K562 (cell line): ENCODE measurements at regions of chr2 and their contacts with region 1.

Region 1: DNA sequence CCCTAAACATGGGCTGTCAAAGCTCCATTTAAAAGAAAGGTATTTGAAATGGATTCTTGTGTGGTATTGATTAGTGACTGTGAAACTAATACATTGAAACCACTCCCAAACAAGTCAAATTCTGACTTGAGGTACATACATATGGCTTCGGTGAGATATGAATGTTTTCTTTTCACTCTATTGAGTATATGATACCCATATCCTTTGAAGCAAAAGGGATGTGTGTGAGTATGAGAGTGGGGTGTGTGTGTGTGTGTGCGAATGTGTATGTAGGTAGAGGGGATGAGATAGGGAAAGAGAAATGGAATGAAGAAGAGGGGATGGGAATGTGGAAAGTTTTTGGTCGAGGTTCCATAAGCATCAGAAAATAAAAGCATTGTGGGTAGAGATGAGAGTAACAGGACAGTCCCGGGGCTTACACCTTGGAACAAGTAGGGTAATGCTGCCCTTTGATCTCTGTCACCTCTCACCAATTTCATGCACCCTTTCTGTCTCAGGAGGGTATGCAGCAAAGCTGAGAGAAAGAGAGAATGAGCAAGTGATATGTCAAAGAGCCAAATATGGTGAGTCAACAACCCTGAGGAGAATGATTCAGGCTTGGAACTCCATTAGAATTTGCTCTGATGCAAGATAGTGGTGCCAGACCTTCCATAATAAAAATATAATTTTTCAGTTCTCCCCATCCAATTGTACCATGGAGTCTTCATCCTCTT is 64.0 kb upstream of the ZEB2 start:
- DNase-seq: peak in 1 of 4 experiments; percentile 37
- ATAC-seq: no peak
- H3K4me3 ChIP-seq: 0 out of 2 replicates have a peak overlapping the region, but pooled peaks have one; percentile 21
- H3K27ac ChIP-seq: peak overlapping the region; percentile 100
- H3K4me1 ChIP-seq: peaks cover 4 to 53% of the 10 kb centered on the region in 2 experiments
- H3K27me3 ChIP-seq: no peaks in the 10 kb centered on the region
- CTCF ChIP-seq: no peak
- EP300 ChIP-seq: no peak
- POLR2A ChIP-seq: peak; percentile 20; the same call in 1 of the 2 replicates
- RAD21 ChIP-seq: no peak

Region 2: GRCh38 chr2:144332356-144333142 is 251.3 kb before region 1 on chr2:
- CTCF ChIA-PET with region 1: no interaction called
- POLR2A ChIA-PET with region 1: no interaction called
- in situ Hi-C with region 1: no loop called
- intact Hi-C with region 1: loop called (anchors 2 kb)
- DNase-seq: peak; percentile 92 to 94 (median 92)
- ATAC-seq: peak; percentile 91
- H3K4me3 ChIP-seq: peak overlapping the region; percentile 60
- H3K27ac ChIP-seq: peak overlapping the region; percentile 95
- H3K4me1 ChIP-seq: peaks cover 6 to 9% of the 10 kb centered on the region in 2 experiments; a peak in 4 of 5 replicates
- H3K27me3 ChIP-seq: no peaks in the 10 kb centered on the region
- CTCF ChIP-seq: no peak
- EP300 ChIP-seq: no peak
- POLR2A ChIP-seq: peak; percentile 85
- RAD21 ChIP-seq: no peak

Region 3: DNA sequence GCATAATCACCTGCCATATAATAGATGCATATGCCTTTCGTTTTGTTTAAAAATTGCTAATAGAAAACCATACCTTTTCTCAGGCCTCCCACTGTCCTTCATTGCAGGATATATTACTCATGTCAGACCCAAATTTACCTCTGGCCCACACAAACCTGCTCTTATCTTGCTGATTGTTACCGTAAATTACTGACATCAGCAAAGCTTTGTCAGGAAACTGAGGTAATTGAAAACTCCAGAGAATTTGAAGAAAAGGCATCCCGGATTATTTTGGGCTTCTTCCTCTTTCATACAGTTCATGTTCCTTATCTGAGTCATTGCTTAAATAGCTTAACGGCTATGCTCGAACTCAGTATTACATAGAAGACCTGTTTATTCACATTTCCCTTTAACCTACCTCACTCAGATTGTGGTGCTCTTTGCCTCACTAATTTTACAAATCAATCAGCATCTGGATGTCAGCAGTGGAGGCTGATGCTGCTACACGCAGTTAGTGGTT is 209.7 kb before region 1 on chr2:
- CTCF ChIA-PET with region 1: no interaction called
- POLR2A ChIA-PET with region 1: no interaction called
- in situ Hi-C with region 1: no loop called
- intact Hi-C with region 1: loop called (anchors 5 kb)
- DNase-seq: no peak
- ATAC-seq: no peak
- H3K4me3 ChIP-seq: no peak overlapping the region
- H3K27ac ChIP-seq: peak overlapping the region; percentile 41; the same call in 2 of the 3 replicates
- H3K4me1 ChIP-seq: peaks cover 4 to 72% of the 10 kb centered on the region in 2 experiments
- H3K27me3 ChIP-seq: no peaks in the 10 kb centered on the region
- CTCF ChIP-seq: no peak
- EP300 ChIP-seq: no peak
- POLR2A ChIP-seq: no peak
- RAD21 ChIP-seq: no peak

Region 4: DNA sequence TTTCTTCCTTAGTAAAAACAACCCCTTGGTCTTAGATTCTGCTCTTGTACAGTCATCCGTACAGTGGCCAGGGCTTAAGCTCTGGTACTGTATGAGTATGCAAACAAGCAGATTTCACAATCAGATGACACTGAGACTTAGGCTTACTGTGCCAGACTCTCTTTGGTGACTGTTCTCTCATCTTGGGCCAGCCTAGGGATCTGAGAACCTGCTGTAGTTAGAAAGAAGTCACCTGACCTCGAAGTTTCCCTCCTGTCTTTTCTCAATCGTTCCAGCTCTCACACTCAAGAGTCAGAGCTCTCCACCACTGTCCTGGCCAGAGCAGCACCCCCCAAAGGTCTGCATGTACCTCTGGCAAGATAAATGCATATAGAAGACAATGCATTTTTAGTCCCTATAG is 127.2 kb before region 1 on chr2:
- CTCF ChIA-PET with region 1: no interaction called
- POLR2A ChIA-PET with region 1: no interaction called
- in situ Hi-C with region 1: no loop called
- intact Hi-C with region 1: loop called (anchors 5 kb)
- DNase-seq: peak in 2 of 4 experiments; percentile 46 to 62
- ATAC-seq: peak; percentile 69
- H3K4me3 ChIP-seq: no peak overlapping the region
- H3K27ac ChIP-seq: no peak overlapping the region
- H3K4me1 ChIP-seq: peaks cover 5 to 84% of the 10 kb centered on the region in 2 experiments; a peak in 4 of 5 replicates
- H3K27me3 ChIP-seq: no peaks in the 10 kb centered on the region
- CTCF ChIP-seq: no peak
- EP300 ChIP-seq: no peak
- POLR2A ChIP-seq: no peak
- RAD21 ChIP-seq: no peak

Region 5: GRCh38 chr2:144572977-144573376 is 10.9 kb before region 1 on chr2:
- CTCF ChIA-PET with region 1: no interaction called
- POLR2A ChIA-PET with region 1: interaction called, 11 read pairs
- in situ Hi-C with region 1: no loop called
- intact Hi-C with region 1: no loop called
- DNase-seq: no peak
- ATAC-seq: no peak
- H3K4me3 ChIP-seq: no peak overlapping the region
- H3K27ac ChIP-seq: no peak overlapping the region
- H3K4me1 ChIP-seq: no peaks in the 10 kb centered on the region; a peak in 2 of 5 replicates
- H3K27me3 ChIP-seq: no peaks in the 10 kb centered on the region
- CTCF ChIP-seq: no peak
- EP300 ChIP-seq: no peak
- POLR2A ChIP-seq: no peak
- RAD21 ChIP-seq: no peak

Region 6: GRCh38 chr2:144659731-144660275 is 75.9 kb after region 1 on chr2:
- CTCF ChIA-PET with region 1: no interaction called
- POLR2A ChIA-PET with region 1: interaction called, 4 read pairs
- in situ Hi-C with region 1: no loop called
- intact Hi-C with region 1: loop called (anchors 5 kb)
- DNase-seq: peak; percentile 48 to 88 (median 66)
- ATAC-seq: peak; percentile 92
- H3K4me3 ChIP-seq: no peak overlapping the region
- H3K27ac ChIP-seq: peak overlapping the region; percentile 90
- H3K4me1 ChIP-seq: peaks cover 9 to 40% of the 10 kb centered on the region in 2 experiments; a peak in 4 of 5 replicates
- H3K27me3 ChIP-seq: no peaks in the 10 kb centered on the region
- CTCF ChIP-seq: no peak
- EP300 ChIP-seq: peak; percentile 42; the same call in 1 of the 2 replicates
- POLR2A ChIP-seq: no peak
- RAD21 ChIP-seq: peak in 1 of 2 experiments; percentile 26; a peak in 3 of 4 replicates

Region 7: GRCh38 chr2:144830543-144830942 is 246.6 kb after region 1 on chr2:
- CTCF ChIA-PET with region 1: no interaction called
- POLR2A ChIA-PET with region 1: no interaction called
- in situ Hi-C with region 1: no loop called
- intact Hi-C with region 1: no loop called
- DNase-seq: no peak
- ATAC-seq: no peak
- H3K4me3 ChIP-seq: no peak overlapping the region
- H3K27ac ChIP-seq: no peak overlapping the region
- H3K4me1 ChIP-seq: peaks cover 0 to 11% of the 10 kb centered on the region in 2 experiments; a peak in 4 of 5 replicates
- H3K27me3 ChIP-seq: no peaks in the 10 kb centered on the region
- CTCF ChIP-seq: no peak
- EP300 ChIP-seq: no peak
- POLR2A ChIP-seq: no peak
- RAD21 ChIP-seq: no peak

Region 8: DNA sequence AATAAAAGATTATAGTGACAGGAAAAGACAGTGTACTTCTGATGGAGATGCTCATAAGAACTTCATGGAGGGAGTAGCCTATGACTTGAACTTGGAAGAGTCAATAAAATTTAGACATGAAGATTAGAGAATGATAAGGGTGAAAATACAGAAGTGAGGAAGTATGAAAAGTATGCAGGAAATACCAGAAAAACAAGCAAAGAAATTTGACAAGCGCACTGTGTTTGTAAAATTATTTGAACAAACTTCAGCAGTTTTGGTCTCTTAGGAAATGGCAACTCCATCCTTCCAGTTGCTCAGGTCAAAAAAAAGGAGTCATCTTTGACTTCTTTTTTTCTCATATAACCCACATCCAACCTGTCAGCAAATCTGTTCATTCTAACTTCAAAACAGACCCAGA is 800.1 kb after region 1 on chr2:
- CTCF ChIA-PET with region 1: no interaction called
- POLR2A ChIA-PET with region 1: no interaction called
- in situ Hi-C with region 1: no loop called
- intact Hi-C with region 1: no loop called
- DNase-seq: no peak
- ATAC-seq: no peak
- H3K4me3 ChIP-seq: no peak overlapping the region
- H3K27ac ChIP-seq: no peak overlapping the region
- H3K4me1 ChIP-seq: no peaks in the 10 kb centered on the region
- H3K27me3 ChIP-seq: no peaks in the 10 kb centered on the region
- CTCF ChIP-seq: no peak
- EP300 ChIP-seq: no peak
- POLR2A ChIP-seq: no peak
- RAD21 ChIP-seq: no peak

Region 9: GRCh38 chr2:145752091-145752806 is 1168.4 kb after region 1 on chr2:
- CTCF ChIA-PET with region 1: no interaction called
- POLR2A ChIA-PET with region 1: no interaction called
- in situ Hi-C with region 1: no loop called
- intact Hi-C with region 1: loop called (anchors 10 kb)
- DNase-seq: peak; percentile 34 to 83 (median 50)
- ATAC-seq: peak; percentile 81
- H3K4me3 ChIP-seq: no peak overlapping the region
- H3K27ac ChIP-seq: peak overlapping the region; percentile 68
- H3K4me1 ChIP-seq: peaks cover 22 to 56% of the 10 kb centered on the region in 2 experiments
- H3K27me3 ChIP-seq: no peaks in the 10 kb centered on the region
- CTCF ChIP-seq: peak; percentile 54 to 76 (median 70)
- EP300 ChIP-seq: peak; percentile 29; the same call in 1 of the 2 replicates
- POLR2A ChIP-seq: no peak
- RAD21 ChIP-seq: peak; percentile 82 to 89